ENCODE measurements at regions of chr17 and their contacts with region 1.

Region 1: DNA sequence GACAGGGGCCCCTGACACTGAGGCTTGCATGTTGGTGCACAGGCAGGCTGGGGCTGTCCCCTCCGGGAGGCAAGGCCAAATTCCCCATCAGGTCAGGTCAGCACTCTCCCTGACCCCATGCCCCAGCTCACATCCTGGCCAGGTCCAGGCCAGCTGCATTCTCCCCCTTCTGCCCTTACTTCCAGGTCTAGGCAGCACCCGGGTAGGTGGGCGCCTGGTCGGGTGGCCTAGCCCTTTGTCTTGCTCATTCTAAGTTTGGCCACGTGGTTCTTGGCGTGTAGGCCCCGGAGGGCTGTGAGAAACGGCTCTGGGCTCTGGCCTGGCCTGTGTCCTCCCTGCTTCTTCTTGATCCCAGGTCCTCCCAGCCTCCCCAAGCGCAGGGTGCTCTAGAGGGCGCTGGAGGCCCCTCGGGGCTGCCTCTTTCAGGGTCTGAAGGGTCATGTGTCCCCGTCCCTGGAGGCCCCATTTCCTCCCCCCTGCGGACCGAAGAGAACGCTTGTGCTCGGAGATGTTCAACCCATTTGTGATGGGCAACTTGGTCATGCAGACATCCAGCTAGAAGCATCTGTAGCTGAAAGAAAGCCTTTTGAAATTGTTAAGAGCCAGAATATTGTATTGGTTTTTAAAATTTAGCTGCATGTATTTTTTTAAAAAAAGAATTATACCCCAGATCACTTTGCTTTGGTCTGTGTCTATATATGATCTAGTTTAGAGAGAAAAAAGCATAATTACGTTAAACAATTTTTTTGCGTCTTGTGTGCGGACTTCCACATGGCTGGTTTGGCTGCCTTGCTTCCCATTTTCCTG is 6.7 kb downstream of the BAHCC1 start:
- DNase-seq: peak; percentile 59 to 66 (median 64)
- H3K4me3 ChIP-seq: peak overlapping the region in 4 of 7 experiments; percentile 10 to 93 (median 39)
- H3K27ac ChIP-seq: no peak overlapping the region
- H3K4me1 ChIP-seq: peaks cover 11 to 80% (median 49%) of the 10 kb centered on the region in 4 experiments
- H3K27me3 ChIP-seq: no peaks in the 10 kb centered on the region

Region 2: GRCh38 chr17:81267390-81268067 is 134.4 kb before region 1 on chr17:
- CTCF ChIA-PET with region 1: no interaction called
- POLR2A ChIA-PET with region 1: no interaction called
- DNase-seq: no peak
- H3K4me3 ChIP-seq: no peak overlapping the region
- H3K27ac ChIP-seq: no peak overlapping the region
- H3K4me1 ChIP-seq: peaks cover under 1 to 8% (median 3%) of the 10 kb centered on the region in 4 experiments
- H3K27me3 ChIP-seq: no peaks in the 10 kb centered on the region

Region 3: GRCh38 chr17:81387100-81388090 is 14.5 kb before region 1 on chr17:
- CTCF ChIA-PET with region 1: no interaction called
- POLR2A ChIA-PET with region 1: no interaction called
- DNase-seq: peak; percentile 75 to 87 (median 84)
- H3K4me3 ChIP-seq: peak overlapping the region; percentile 47 to 83 (median 70)
- H3K27ac ChIP-seq: no peak overlapping the region
- H3K4me1 ChIP-seq: peaks cover 0 to 62% (median 41%) of the 10 kb centered on the region in 4 experiments
- H3K27me3 ChIP-seq: peaks cover 0 to 10% (median 0%) of the 10 kb centered on the region in 5 experiments

Region 4: DNA sequence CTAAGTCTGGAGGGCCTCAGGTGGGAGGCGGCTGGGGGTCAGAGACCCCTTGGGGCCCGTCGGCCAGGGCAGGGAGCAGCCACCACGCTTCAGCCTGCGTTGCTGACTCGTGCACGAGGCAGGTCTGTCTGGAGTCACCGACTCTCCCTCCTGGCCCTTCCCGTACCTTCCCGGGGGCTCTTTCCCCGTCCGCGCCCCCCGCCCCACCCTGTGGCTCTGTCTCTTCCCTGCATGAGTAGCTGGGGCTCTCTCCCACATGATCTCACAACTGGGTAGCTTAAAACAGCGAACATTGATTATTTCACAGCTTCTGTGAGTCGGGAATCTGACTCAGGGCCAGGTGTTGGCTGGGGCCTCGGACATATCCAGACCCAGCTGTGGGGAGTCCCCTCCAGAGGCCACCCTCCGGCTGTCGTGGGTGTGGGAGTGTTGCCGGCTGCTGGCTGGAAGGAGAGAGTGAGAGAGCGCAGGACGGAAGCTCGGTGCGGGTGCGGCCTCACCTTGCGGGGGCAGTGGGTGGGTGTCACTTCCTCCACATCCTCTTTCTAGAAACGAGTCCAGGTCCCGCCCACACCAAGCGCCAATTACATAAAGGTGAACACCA is 10.7 kb after region 1 on chr17:
- CTCF ChIA-PET with region 1: interaction called, 24 read pairs
- POLR2A ChIA-PET with region 1: interaction called, 6 read pairs
- DNase-seq: peak; percentile 71 to 92 (median 89)
- H3K4me3 ChIP-seq: peak overlapping the region in 3 of 7 experiments; percentile 36 to 53 (median 48)
- H3K27ac ChIP-seq: no peak overlapping the region
- H3K4me1 ChIP-seq: peaks cover 2 to 65% (median 43%) of the 10 kb centered on the region in 4 experiments
- H3K27me3 ChIP-seq: no peaks in the 10 kb centered on the region

Measured in common myeloid progenitor, CD34-positive (primary cell).